Right lobe of liver (tissue), 6 donors: ENCODE measurements at regions of chr2 and their contacts with region 1.

Region 1: DNA sequence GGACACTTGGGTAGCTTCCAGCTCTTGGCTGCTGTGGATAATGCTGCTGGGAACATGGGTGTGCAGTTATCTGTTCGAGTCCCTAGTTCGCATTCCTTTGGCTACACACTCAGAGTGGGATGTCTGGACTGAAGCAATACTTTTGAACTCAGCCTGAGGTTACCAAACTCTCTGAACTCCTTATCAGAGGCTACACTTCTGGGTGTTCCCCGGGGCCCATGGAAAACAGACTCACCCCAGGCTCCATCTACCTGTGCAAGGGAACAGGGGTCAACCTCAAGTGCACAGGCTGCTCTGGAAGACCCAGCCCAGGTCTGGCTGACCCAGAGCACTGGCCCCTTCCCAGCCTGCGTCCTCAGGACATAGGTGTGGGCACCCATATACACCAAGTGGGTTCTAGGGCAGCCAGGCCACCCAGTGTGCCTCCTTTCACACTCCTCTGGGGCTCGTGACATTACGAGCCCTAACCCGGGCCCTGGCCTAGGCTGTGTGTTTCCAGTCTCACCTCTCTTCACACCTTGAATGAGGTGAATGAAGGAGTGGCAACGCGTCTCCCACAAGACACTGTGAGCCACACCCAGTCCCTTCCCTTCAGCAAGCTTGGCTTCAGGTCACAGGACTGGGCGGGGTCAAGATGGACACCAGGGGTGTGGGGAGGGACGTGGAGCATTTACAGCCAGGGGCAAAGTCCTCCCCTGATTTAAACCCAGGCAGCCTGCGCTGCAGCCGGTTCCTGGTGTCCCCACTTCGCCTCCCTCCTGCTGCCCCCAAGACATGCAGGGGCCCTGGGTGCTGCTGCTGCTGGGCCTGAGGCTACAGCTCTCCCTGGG is at the start of gene ALPI:
- DNase-seq: no peak
- ATAC-seq: no peak
- H3K4me3 ChIP-seq: no peak within 1 kb of the TSS
- H3K27ac ChIP-seq: no peak within 1 kb of the TSS
- H3K4me1 ChIP-seq: no peaks in the 10 kb centered on the region
- H3K27me3 ChIP-seq: no peaks in the 10 kb centered on the region
- CTCF ChIP-seq: no peak
- POLR2A ChIP-seq: no peak
- total RNA-seq, gene ALPI: 0.19 to 0.25 TPM in 2 of 6 experiments, not detected in the others

Region 2: GRCh38 chr2:232501331-232501771 is 45.7 kb after region 1 on chr2:
- intact Hi-C with region 1: no loop called
- DNase-seq: no peak
- ATAC-seq: peak in 1 of 4 donors; percentile 41
- H3K4me3 ChIP-seq: no peak overlapping the region
- H3K27ac ChIP-seq: no peak overlapping the region
- H3K4me1 ChIP-seq: peaks cover 0 to 8% (median 0%) of the 10 kb centered on the region in 4 donors
- H3K27me3 ChIP-seq: no peaks in the 10 kb centered on the region
- CTCF ChIP-seq: no peak
- POLR2A ChIP-seq: no peak

Region 3: GRCh38 chr2:232511336-232511888 is 55.8 kb after region 1 on chr2:
- intact Hi-C with region 1: loop called in 1 of 2 experiments (anchors 10 kb)
- DNase-seq: no peak
- ATAC-seq: peak in 2 of 4 donors; percentile 11 to 25
- H3K4me3 ChIP-seq: no peak overlapping the region
- H3K27ac ChIP-seq: no peak overlapping the region
- H3K4me1 ChIP-seq: no peaks in the 10 kb centered on the region
- H3K27me3 ChIP-seq: no peaks in the 10 kb centered on the region
- CTCF ChIP-seq: no peak
- POLR2A ChIP-seq: no peak